Naive thymus-derived CD8-positive, alpha-beta T cell (primary cell): ENCODE measurements at regions of chr19 and their contacts with region 1.

Region 1: DNA sequence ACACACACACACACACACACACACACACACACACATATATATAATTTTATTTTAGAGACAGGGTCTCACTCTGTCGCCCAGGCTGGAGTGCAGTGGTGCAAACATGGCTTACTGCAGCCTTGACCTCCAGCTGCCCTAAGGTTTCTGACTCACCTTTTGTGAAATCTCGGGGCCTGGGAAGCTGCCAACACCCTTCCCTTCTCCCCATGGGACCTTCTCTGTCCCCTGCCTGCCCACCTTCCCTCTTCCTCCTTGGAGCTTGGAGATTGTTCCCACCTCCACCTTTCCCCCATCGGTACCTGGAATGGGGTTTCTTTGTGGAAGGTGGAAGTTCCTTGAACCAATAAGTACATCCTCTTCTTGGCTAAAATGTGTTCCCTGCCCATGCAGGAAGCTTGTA is 6.3 kb downstream of the ARRDC5 start:
- DNase-seq: no peak
- ATAC-seq: no peak
- H3K4me3 Mint-ChIP-seq: no peak overlapping the region
- H3K27ac Mint-ChIP-seq: peak overlapping the region in 5 of 10 donors; percentile 32 to 63 (median 47)
- H3K4me1 Mint-ChIP-seq: peaks cover 0 to 16% (median 10%) of the 10 kb centered on the region in 4 donors
- H3K27me3 Mint-ChIP-seq: no peaks in the 10 kb centered on the region

Region 2: GRCh38 chr19:4815426-4816201 is 80.8 kb before region 1 on chr19:
- POLR2A ChIA-PET with region 1: no interaction called
- DNase-seq: peak; percentile 54 to 87 (median 69)
- ATAC-seq: peak; percentile 90 to 92
- H3K4me3 Mint-ChIP-seq: peak overlapping the region; percentile 69 to 87 (median 80)
- H3K27ac Mint-ChIP-seq: peak overlapping the region; percentile 57 to 95 (median 85)
- H3K4me1 Mint-ChIP-seq: peaks cover 10 to 28% (median 18%) of the 10 kb centered on the region in 4 donors
- H3K27me3 Mint-ChIP-seq: no peaks in the 10 kb centered on the region

Region 3: GRCh38 chr19:4867534-4868285 is 28.7 kb before region 1 on chr19 and contains the start of gene PLIN3:
- POLR2A ChIA-PET with region 1: no interaction called
- DNase-seq: peak; percentile 76 to 92 (median 80)
- ATAC-seq: peak; percentile 89 to 90
- H3K4me3 Mint-ChIP-seq: peak within 1 kb of the TSS; percentile 72 to 90 (median 82)
- H3K27ac Mint-ChIP-seq: peak within 1 kb of the TSS; percentile 26 to 82 (median 70)
- H3K4me1 Mint-ChIP-seq: peaks cover 8 to 18% (median 15%) of the 10 kb centered on the region in 4 donors
- H3K27me3 Mint-ChIP-seq: peaks cover 0 to 1% (median 0%) of the 10 kb centered on the region in 5 donors
- polyA plus RNA-seq, gene PLIN3: 14.1 to 17.3 (median 15.2) TPM

Region 4: GRCh38 chr19:4909897-4910593 is 13.7 kb after region 1 on chr19:
- POLR2A ChIA-PET with region 1: interaction called, 13 read pairs
- DNase-seq: peak; percentile 90 to 96 (median 93)
- ATAC-seq: peak; percentile 83 to 87
- H3K4me3 Mint-ChIP-seq: peak overlapping the region; percentile 97 to 100 (median 100)
- H3K27ac Mint-ChIP-seq: peak overlapping the region in 5 of 10 donors; percentile 3 to 99 (median 67)
- H3K4me1 Mint-ChIP-seq: peaks cover 25 to 76% (median 64%) of the 10 kb centered on the region in 4 donors
- H3K27me3 Mint-ChIP-seq: no peaks in the 10 kb centered on the region